ENCODE measurements at regions of chr7 and their contacts with region 1.

Region 1: DNA sequence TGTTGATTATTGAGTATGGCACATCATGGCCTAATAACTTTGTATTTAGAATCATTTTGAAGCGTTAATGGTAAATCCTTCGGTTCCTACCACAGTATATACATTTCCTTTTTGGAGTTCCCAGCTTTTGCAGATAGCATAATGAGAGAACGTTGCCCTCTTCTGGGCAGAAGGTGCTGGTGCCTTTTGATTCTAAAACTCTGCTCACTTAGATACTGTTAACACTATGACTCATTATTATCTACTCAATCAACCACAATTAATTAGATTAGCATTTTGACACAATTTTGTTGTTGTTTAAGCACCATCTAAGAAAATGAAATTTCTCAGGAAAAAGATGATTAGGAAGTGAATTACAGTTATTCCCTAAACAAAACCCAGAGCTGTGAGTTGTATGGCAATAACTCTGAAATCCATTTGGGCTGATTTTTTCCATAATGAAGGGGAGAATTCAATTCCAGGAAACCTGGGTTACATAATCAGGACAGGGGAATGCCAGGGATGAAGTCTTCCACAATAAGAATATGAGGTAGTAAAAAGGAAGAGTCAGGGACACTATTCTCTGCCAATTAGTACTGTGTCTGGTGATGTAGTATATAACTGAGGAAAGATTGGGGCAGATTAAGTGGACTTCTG is 11.5 kb upstream of the DLD start:
- DNase-seq: peak; percentile 59 to 84
- H3K4me3 ChIP-seq: no peak overlapping the region
- H3K27ac ChIP-seq: no peak overlapping the region
- H3K4me1 ChIP-seq: peaks cover 0 to 14% (median 4%) of the 10 kb centered on the region in 4 donors
- H3K27me3 ChIP-seq: no peaks in the 10 kb centered on the region
- CTCF ChIP-seq: peak in 5 of 7 experiments; percentile 55 to 78 (median 64)
- EP300 ChIP-seq: no peak
- POLR2A ChIP-seq: no peak

Region 2: GRCh38 chr7:107725151-107725740 is 154.3 kb before region 1 on chr7:
- intact Hi-C with region 1: no loop called
- DNase-seq: peak; percentile 53 to 83
- H3K4me3 ChIP-seq: no peak overlapping the region
- H3K27ac ChIP-seq: no peak overlapping the region
- H3K4me1 ChIP-seq: no peaks in the 10 kb centered on the region
- H3K27me3 ChIP-seq: peaks cover 0 to 5% (median 0%) of the 10 kb centered on the region in 3 donors
- CTCF ChIP-seq: peak in 5 of 7 experiments; percentile 48 to 66 (median 60)
- EP300 ChIP-seq: no peak
- POLR2A ChIP-seq: no peak

Region 3: DNA sequence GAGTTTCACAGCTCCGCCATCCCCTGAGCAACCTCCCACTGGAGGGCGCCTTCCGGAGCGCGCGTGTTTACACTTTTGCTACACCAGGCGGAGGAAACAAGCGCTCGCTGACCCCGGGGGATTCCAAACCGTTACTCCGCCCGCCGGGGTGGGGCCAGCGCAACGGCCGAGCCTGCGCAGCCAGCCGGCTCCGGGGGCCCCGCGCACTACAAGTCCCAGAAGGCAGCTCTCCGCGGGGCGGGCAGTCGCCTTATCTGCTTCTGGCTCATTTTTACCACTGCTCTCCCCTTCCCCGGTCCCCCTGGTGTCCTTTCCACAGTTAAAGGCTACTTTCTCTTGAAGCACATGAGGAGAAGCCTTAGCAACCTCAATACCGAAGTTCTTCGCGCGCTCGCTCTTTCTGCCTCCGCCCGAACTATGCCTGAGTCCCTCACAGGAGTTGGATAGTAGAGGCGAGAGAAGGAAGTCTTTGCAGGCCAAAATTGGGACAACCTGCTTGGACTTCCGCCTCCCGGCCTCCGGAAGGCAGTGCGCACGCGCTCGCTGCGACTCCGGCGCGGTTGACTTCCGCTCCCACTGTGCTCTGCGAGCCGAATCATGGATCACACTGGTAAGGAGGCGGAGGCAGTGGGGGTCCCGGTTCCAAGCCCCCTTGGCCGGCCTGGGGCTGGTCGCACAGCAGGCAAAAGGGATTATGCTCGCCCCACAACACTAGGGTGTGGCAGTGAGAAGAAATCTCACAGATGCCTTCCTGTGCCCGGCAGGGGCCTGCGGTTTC is 135.8 kb before region 1 on chr7 and contains the start of gene CBLL1:
- intact Hi-C with region 1: loop called (anchors 5 kb)
- DNase-seq: peak; percentile 96 to 99
- H3K4me3 ChIP-seq: peak within 1 kb of the TSS; percentile 66 to 98 (median 83)
- H3K27ac ChIP-seq: peak within 1 kb of the TSS; percentile 90 to 97 (median 93)
- H3K4me1 ChIP-seq: peaks cover 26 to 50% (median 43%) of the 10 kb centered on the region in 4 donors
- H3K27me3 ChIP-seq: no peaks in the 10 kb centered on the region
- CTCF ChIP-seq: peak in 5 of 7 experiments; percentile 44 to 79 (median 69)
- EP300 ChIP-seq: no peak
- POLR2A ChIP-seq: no peak
- total RNA-seq, gene CBLL1: 5.2 to 29.4 (median 23.7) TPM

Region 4: GRCh38 chr7:108146070-108146837 is 266.7 kb after region 1 on chr7:
- intact Hi-C with region 1: loop called (anchors 10 kb)
- DNase-seq: peak; percentile 59 to 93
- H3K4me3 ChIP-seq: peak overlapping the region in 2 of 4 donors; percentile 17 to 22
- H3K27ac ChIP-seq: no peak overlapping the region
- H3K4me1 ChIP-seq: peaks cover 0 to 10% (median 6%) of the 10 kb centered on the region in 4 donors
- H3K27me3 ChIP-seq: no peaks in the 10 kb centered on the region
- CTCF ChIP-seq: peak in 5 of 7 experiments; percentile 69 to 84 (median 80)
- EP300 ChIP-seq: no peak
- POLR2A ChIP-seq: no peak

Region 5: DNA sequence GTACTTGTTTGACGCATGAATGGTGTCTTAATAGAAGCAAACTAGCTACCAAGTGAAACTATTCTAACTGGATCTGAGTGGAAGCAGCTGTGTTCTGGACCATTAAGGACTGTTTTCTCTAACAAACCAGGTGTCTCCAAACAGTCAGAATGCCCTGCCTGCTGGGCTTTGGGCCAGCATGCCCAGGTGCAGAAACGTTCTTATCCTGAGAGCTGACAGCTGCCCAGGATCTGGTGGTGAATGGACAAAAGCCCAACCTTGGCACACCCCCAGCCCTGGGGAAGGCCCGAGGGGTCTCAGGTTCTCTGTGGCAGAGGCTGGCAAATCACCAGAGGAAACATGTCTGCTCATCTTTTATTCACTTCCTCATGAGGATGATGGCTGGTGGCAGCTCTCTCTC is 298.9 kb after region 1 on chr7:
- intact Hi-C with region 1: no loop called
- DNase-seq: peak; percentile 48 to 64
- H3K4me3 ChIP-seq: no peak overlapping the region
- H3K27ac ChIP-seq: no peak overlapping the region
- H3K4me1 ChIP-seq: no peaks in the 10 kb centered on the region
- H3K27me3 ChIP-seq: no peaks in the 10 kb centered on the region
- CTCF ChIP-seq: no peak
- EP300 ChIP-seq: no peak
- POLR2A ChIP-seq: no peak

Measured in stomach (tissue), 19 donors.